Natural killer cell (primary cell): ENCODE measurements at regions of chr7 and their contacts with region 1.

Region 1: GRCh38 chr7:33932832-33933468 is 27.6 kb downstream of the BMPER start:
- DNase-seq: peak; percentile 50 to 76
- ATAC-seq: peak; percentile 49 to 83 (median 74)
- H3K4me3 ChIP-seq: no peak overlapping the region
- H3K4me3 Mint-ChIP-seq: no peak overlapping the region
- H3K27ac ChIP-seq: no peak overlapping the region
- H3K27ac Mint-ChIP-seq: no peak overlapping the region
- H3K4me1 ChIP-seq: peaks cover 5% of the 10 kb centered on the region
- H3K4me1 Mint-ChIP-seq: no peaks in the 10 kb centered on the region
- H3K27me3 ChIP-seq: no peaks in the 10 kb centered on the region
- H3K27me3 Mint-ChIP-seq: peaks cover 7 to 9% of the 10 kb centered on the region in 2 donors
- CTCF ChIP-seq: peak; percentile 85

Region 2: DNA sequence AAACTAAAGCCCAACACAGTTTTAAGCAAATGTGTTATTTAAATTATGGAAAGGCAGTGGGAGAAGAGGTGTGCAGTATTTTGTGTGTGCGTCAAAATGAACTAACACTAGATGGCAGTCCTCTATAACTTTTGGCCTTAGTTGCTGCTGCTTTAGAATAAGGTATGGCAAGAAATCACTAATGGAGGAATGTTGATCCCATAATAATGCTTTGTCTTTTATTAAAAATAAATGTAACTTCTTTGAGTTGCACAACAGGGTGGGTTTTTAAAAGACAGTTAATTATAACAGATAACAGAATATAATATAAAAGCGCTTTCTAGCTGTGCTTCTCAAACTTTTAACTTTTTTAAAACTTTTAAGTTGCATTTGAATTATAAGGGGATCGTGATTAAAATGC is 747.2 kb before region 1 on chr7:
- intact Hi-C with region 1: loop called (anchors 1 kb)
- DNase-seq: peak in 1 of 2 donors; percentile 64
- ATAC-seq: peak in 1 of 3 donors; percentile 53
- H3K4me3 ChIP-seq: no peak overlapping the region
- H3K4me3 Mint-ChIP-seq: no peak overlapping the region
- H3K27ac ChIP-seq: no peak overlapping the region
- H3K27ac Mint-ChIP-seq: no peak overlapping the region
- H3K4me1 ChIP-seq: no peaks in the 10 kb centered on the region
- H3K4me1 Mint-ChIP-seq: peaks cover 5% of the 10 kb centered on the region in 2 donors
- H3K27me3 ChIP-seq: no peaks in the 10 kb centered on the region
- H3K27me3 Mint-ChIP-seq: no peaks in the 10 kb centered on the region
- CTCF ChIP-seq: peak; percentile 49

Region 3: GRCh38 chr7:33243319-33243881 is 689.5 kb before region 1 on chr7:
- intact Hi-C with region 1: loop called (anchors 2 kb)
- DNase-seq: peak in 1 of 2 donors; percentile 21
- ATAC-seq: no peak
- H3K4me3 ChIP-seq: no peak overlapping the region
- H3K4me3 Mint-ChIP-seq: no peak overlapping the region
- H3K27ac ChIP-seq: no peak overlapping the region
- H3K27ac Mint-ChIP-seq: no peak overlapping the region
- H3K4me1 ChIP-seq: no peaks in the 10 kb centered on the region
- H3K4me1 Mint-ChIP-seq: no peaks in the 10 kb centered on the region
- H3K27me3 ChIP-seq: no peaks in the 10 kb centered on the region
- H3K27me3 Mint-ChIP-seq: no peaks in the 10 kb centered on the region
- CTCF ChIP-seq: no peak

Region 4: DNA sequence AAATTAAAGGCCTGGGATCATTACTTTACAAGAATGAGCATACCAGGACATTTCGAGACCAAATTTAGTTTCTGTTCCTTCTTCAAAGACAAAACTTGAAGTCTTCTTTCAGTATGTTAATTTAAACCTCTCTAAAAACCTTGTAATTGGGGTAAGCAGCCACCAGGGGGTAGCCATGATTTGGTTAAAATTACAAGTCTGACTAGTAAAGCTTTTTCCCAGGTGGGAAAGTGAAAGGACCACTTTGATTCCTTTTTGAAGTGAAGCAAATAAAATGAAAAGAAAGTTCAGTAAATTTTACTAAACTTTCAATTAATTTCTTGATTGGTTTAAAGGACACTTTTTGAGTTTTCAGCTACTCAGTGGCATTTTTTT is 509.3 kb before region 1 on chr7:
- intact Hi-C with region 1: loop called (anchors 10 kb)
- DNase-seq: peak in 1 of 2 donors; percentile 28
- ATAC-seq: no peak
- H3K4me3 ChIP-seq: no peak overlapping the region
- H3K4me3 Mint-ChIP-seq: no peak overlapping the region
- H3K27ac ChIP-seq: no peak overlapping the region
- H3K27ac Mint-ChIP-seq: no peak overlapping the region
- H3K4me1 ChIP-seq: no peaks in the 10 kb centered on the region
- H3K4me1 Mint-ChIP-seq: no peaks in the 10 kb centered on the region
- H3K27me3 ChIP-seq: no peaks in the 10 kb centered on the region
- H3K27me3 Mint-ChIP-seq: no peaks in the 10 kb centered on the region
- CTCF ChIP-seq: peak; percentile 54

Region 5: GRCh38 chr7:33459340-33459751 is 473.6 kb before region 1 on chr7:
- intact Hi-C with region 1: loop called (anchors 1 kb)
- DNase-seq: peak in 1 of 2 donors; percentile 9
- ATAC-seq: peak; percentile 68 to 94 (median 71)
- H3K4me3 ChIP-seq: no peak overlapping the region
- H3K4me3 Mint-ChIP-seq: no peak overlapping the region
- H3K27ac ChIP-seq: no peak overlapping the region
- H3K27ac Mint-ChIP-seq: peak overlapping the region in 1 of 2 donors; percentile 25
- H3K4me1 ChIP-seq: no peaks in the 10 kb centered on the region
- H3K4me1 Mint-ChIP-seq: peaks cover 7% of the 10 kb centered on the region in 2 donors
- H3K27me3 ChIP-seq: no peaks in the 10 kb centered on the region
- H3K27me3 Mint-ChIP-seq: no peaks in the 10 kb centered on the region
- CTCF ChIP-seq: peak; percentile 29